ENCODE measurements at regions of chr15 and their contacts with region 1.

Region 1: GRCh38 chr15:56245871-56246814 is 2.5 kb upstream of the RFX7 start:
- DNase-seq: peak; percentile 84 to 96
- ATAC-seq: peak; percentile 70

Region 2: DNA sequence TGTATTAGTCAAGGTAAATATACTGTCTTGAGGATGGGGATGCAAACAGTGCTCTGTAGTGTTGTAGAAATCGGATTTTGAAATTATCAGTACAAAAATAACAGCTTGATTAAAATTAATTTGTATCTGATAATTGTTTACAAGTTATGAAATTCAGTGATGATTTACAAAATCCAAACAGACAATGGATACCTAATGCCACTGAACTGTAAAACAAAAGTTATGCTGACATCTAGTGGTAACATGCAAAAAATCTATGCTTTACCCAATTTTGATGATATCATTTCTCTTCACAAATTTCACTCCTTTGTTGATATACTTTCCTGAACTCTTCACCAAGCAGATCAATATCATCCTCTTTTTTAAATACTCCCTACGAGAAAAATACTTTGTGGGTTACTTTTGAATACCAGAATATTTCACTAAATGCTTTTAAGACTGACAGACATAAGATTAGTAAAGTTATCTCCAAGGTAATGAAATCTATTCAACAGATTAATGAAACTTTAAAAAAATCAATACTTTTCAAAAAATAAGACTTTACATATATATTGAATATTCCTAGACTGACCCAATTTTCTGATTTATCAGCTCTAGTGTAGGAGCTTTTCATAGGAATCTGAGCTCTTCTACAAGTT is 182.8 kb after region 1 on chr15:
- intact Hi-C with region 1: loop called in 1 of 2 experiments (anchors 10 kb)
- DNase-seq: no peak
- ATAC-seq: peak; percentile 53